Ascending aorta (tissue), 2 donors: ENCODE measurements at regions of chr2 and their contacts with region 1.

Region 1: DNA sequence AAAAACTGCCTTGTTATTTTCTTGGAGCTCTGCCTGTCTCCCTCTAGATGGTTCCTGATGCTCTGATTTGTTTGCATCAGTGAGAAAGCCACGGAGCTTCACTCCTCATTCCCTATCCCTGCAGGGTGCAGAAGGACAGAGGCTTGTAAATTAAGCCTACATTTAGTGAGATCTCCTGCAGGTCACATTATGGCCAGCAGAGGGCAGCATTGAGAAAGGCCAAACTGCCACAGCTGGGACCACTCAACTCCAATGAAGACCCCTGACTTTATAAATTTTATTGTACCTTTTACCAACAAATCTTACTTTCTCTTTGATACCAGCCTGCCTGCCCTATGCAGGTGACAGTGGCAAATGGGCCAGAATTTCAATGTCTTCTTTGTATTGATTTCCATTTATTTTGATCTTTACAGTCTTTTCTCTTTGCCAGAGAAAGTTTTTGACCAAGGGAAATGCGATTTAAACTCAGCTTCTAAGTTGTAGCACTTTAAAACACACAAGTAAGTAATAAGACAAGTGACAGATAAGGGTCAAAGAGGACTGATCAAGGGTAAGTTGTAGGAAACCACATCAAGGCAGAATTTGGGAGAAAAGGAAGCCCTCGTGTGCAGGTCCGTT is 1029.1 kb upstream of the KLHL29 start:
- DNase-seq: peak in 1 of 2 donors; percentile 76
- H3K4me3 ChIP-seq: no peak overlapping the region
- H3K27ac ChIP-seq: no peak overlapping the region
- H3K4me1 ChIP-seq: no peaks in the 10 kb centered on the region
- H3K27me3 ChIP-seq: no peaks in the 10 kb centered on the region
- CTCF ChIP-seq: peak; percentile 44 to 74 (median 73)

Region 2: DNA sequence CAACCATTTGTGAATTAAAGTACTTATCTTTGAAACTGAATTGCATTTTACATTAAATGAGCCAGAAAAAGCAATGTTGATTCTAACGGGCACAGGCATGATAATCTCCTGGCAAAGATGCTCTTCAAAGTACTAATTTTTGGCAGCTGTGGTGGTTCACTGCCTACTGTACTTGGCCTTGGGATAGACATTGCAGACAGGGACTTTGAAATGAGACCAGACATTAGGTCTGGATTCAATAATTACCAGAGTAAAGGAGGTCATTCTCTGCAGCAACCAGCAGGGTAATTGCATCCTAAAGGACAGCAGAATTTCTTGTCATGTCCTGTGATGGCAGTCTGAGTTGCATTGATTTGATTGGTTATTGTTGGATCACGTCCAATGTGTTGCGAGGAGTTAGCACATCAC is 245.7 kb before region 1 on chr2:
- intact Hi-C with region 1: no loop called
- DNase-seq: no peak
- H3K4me3 ChIP-seq: no peak overlapping the region
- H3K27ac ChIP-seq: no peak overlapping the region
- H3K4me1 ChIP-seq: no peaks in the 10 kb centered on the region
- H3K27me3 ChIP-seq: no peaks in the 10 kb centered on the region
- CTCF ChIP-seq: no peak

Region 3: GRCh38 chr2:23351388-23352141 is 995.6 kb after region 1 on chr2:
- intact Hi-C with region 1: loop called (anchors 2 kb)
- DNase-seq: peak in 1 of 2 donors; percentile 79
- H3K4me3 ChIP-seq: peak overlapping the region in 1 of 2 donors; percentile 41
- H3K27ac ChIP-seq: peak overlapping the region in 1 of 2 donors; percentile 10
- H3K4me1 ChIP-seq: peaks cover 4 to 6% of the 10 kb centered on the region in 2 donors
- H3K27me3 ChIP-seq: no peaks in the 10 kb centered on the region
- CTCF ChIP-seq: peak; percentile 65 to 94 (median 82)